ENCODE measurements at regions of chr1 and their contacts with region 1.

Region 1: GRCh38 chr1:6199298-6200187 is at the start of gene RPL22:
- DNase-seq: peak; percentile 92

Region 2: GRCh38 chr1:6123083-6123482 is 76.5 kb before region 1 on chr1:
- CTCF ChIA-PET with region 1: no interaction called
- POLR2A ChIA-PET with region 1: no interaction called
- DNase-seq: no peak

Region 3: GRCh38 chr1:6185635-6186382 is 13.7 kb before region 1 on chr1:
- CTCF ChIA-PET with region 1: interaction called, 7 read pairs
- POLR2A ChIA-PET with region 1: interaction called, 11 read pairs
- DNase-seq: no peak

Region 4: DNA sequence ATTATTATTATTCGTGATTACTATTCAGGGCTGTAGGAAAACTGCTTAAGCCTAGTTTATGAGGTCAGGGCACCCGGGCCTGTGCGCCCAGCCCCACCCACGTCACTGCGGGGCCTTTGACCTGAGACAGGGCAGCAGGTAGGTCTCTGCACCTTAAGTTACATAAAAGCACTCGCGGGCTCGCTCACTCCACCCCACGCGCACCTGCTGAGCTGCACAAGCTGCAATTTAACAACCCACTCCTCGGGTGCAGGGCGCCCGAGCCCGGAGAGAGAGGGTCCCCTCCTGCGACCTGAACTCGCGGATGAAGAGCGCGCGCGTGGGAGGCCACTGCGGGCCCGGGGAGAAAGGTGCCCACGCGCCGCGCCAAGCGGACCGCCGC is 35.7 kb after region 1 on chr1:
- CTCF ChIA-PET with region 1: interaction called, 11 read pairs
- POLR2A ChIA-PET with region 1: interaction called, 39 read pairs
- DNase-seq: no peak

Measured in HEK293T (cell line).